Adrenal gland (tissue), 19 donors: ENCODE measurements at regions of chr6 and their contacts with region 1.

Region 1: GRCh38 chr6:30589754-30590358 is 18.6 kb downstream of the ABCF1 start:
- DNase-seq: no peak
- H3K4me3 ChIP-seq: no peak overlapping the region
- H3K27ac ChIP-seq: peak overlapping the region in 2 of 5 donors; percentile 54 to 90
- H3K4me1 ChIP-seq: peaks cover 8 to 18% of the 10 kb centered on the region in 2 donors
- H3K27me3 ChIP-seq: no peaks in the 10 kb centered on the region
- CTCF ChIP-seq: no peak
- POLR2A ChIP-seq: no peak

Region 2: DNA sequence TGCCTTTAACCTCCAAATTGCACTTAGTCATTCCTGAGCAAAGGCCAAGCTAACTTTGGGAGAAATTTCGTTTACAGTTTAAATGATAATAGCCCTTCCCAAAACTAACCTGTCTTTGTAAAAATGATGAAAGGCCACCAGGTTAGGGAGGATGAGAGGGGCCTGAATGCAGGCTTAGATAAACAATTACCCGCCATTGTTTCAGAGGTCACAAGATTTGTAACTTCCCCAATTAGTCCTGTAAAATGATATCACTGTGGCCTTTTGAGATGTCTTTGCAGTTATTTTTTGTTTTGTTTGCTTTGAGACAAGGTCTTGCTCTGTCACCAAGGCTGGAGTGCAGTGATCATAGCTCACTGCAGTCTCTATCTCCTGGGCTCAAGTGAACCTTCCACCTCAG is 59.8 kb before region 1 on chr6:
- intact Hi-C with region 1: no loop called
- DNase-seq: no peak
- H3K4me3 ChIP-seq: no peak overlapping the region
- H3K27ac ChIP-seq: peak overlapping the region in 1 of 5 donors; percentile 58
- H3K4me1 ChIP-seq: peaks cover 0 to 12% of the 10 kb centered on the region in 2 donors
- H3K27me3 ChIP-seq: no peaks in the 10 kb centered on the region
- CTCF ChIP-seq: no peak
- POLR2A ChIP-seq: no peak

Region 3: GRCh38 chr6:30541515-30542403 is 48.1 kb before region 1 on chr6:
- intact Hi-C with region 1: loop called in 1 of 2 experiments (anchors 5 kb)
- DNase-seq: peak; percentile 65 to 92 (median 76)
- H3K4me3 ChIP-seq: peak overlapping the region in 1 of 4 donors; percentile 49
- H3K27ac ChIP-seq: peak overlapping the region in 1 of 5 donors; percentile 41
- H3K4me1 ChIP-seq: peaks cover 3 to 7% of the 10 kb centered on the region in 2 donors
- H3K27me3 ChIP-seq: no peaks in the 10 kb centered on the region
- CTCF ChIP-seq: peak; percentile 83 to 96 (median 88)
- POLR2A ChIP-seq: no peak

Region 4: GRCh38 chr6:30664994-30665767 is 75.3 kb after region 1 on chr6:
- intact Hi-C with region 1: loop called in 1 of 2 experiments (anchors 10 kb)
- DNase-seq: no peak
- H3K4me3 ChIP-seq: no peak overlapping the region
- H3K27ac ChIP-seq: no peak overlapping the region
- H3K4me1 ChIP-seq: no peaks in the 10 kb centered on the region
- H3K27me3 ChIP-seq: no peaks in the 10 kb centered on the region
- CTCF ChIP-seq: no peak
- POLR2A ChIP-seq: no peak